B cell (primary cell): ENCODE measurements at regions of chr15 and their contacts with region 1.

Region 1: DNA sequence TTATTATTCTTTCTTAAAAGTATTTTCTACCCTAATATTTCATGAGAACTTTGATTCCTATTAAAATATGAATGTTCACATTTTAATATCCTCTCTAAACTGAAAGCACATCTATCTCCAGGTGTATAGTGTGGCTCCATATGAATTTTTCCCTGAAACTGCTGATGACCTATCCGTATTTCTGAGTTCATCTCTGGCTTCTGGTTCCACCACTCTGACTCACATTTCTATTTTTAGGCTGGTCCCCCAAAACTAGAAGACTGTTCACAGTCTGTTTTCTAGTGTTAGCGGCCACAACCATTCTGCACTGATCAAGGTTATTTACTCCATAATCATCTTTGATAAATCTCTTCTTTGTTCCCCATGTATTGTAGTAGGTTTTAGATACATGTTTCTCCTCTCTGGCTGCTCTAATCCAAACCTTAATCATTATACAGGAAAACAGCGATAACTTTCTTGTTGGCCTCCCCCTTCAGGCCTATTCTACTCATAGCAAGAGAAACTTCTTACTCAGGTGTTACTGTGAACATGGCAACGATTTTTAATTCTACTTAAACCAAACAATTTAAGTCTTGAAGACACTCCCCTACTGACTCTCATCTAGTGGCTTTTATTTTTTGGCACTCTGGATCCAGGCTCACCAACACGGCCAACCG is 12.8 kb downstream of the ADPGK start:
- DNase-seq: no peak
- ATAC-seq: no peak
- H3K4me3 ChIP-seq: no peak overlapping the region
- H3K4me3 Mint-ChIP-seq: no peak overlapping the region
- H3K27ac ChIP-seq: peak overlapping the region in 1 of 2 donors; percentile 14
- H3K27ac Mint-ChIP-seq: peak overlapping the region; percentile 22
- H3K4me1 ChIP-seq: peaks cover 23% of the 10 kb centered on the region in 2 donors
- H3K4me1 Mint-ChIP-seq: peaks cover 30% of the 10 kb centered on the region
- H3K27me3 ChIP-seq: no peaks in the 10 kb centered on the region
- H3K27me3 Mint-ChIP-seq: no peaks in the 10 kb centered on the region
- CTCF ChIP-seq: peak; percentile 24

Region 2: DNA sequence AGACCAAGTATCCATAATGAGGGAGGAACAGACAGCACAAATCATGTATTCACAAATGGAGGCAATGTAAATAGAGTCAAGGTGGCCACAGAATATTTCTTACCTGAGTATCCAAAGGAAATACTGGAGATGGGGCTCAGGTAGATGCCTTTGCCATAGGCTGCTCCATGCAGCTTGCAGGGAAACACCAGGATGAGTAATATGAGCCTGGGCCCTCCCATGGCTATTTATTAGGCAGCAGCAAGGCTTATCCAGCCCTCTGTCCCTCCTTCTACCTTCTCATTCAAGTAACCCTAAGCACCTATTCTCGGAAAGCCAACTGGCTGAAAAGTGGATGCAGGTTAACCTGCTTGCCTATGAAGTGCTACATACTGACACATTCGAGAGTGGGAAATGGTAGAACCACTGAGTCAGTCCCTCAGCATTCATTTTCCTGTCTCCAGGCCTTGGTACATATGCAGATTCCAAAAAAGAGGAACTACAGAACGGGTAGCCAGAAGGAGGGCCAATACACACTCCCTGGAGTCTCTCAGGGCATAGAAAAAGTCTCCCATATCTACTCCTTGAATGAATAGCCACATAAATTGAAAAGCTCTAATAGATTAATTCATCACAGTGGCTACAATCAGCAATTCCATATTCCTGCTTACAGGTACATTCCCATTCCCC is 521.5 kb before region 1 on chr15:
- CTCF ChIA-PET with region 1: no interaction called
- POLR2A ChIA-PET with region 1: no interaction called
- intact Hi-C with region 1: no loop called
- DNase-seq: no peak
- ATAC-seq: no peak
- H3K4me3 ChIP-seq: no peak overlapping the region
- H3K4me3 Mint-ChIP-seq: no peak overlapping the region
- H3K27ac ChIP-seq: no peak overlapping the region
- H3K27ac Mint-ChIP-seq: no peak overlapping the region
- H3K4me1 ChIP-seq: no peaks in the 10 kb centered on the region
- H3K4me1 Mint-ChIP-seq: no peaks in the 10 kb centered on the region
- H3K27me3 ChIP-seq: no peaks in the 10 kb centered on the region
- H3K27me3 Mint-ChIP-seq: no peaks in the 10 kb centered on the region
- CTCF ChIP-seq: no peak

Region 3: DNA sequence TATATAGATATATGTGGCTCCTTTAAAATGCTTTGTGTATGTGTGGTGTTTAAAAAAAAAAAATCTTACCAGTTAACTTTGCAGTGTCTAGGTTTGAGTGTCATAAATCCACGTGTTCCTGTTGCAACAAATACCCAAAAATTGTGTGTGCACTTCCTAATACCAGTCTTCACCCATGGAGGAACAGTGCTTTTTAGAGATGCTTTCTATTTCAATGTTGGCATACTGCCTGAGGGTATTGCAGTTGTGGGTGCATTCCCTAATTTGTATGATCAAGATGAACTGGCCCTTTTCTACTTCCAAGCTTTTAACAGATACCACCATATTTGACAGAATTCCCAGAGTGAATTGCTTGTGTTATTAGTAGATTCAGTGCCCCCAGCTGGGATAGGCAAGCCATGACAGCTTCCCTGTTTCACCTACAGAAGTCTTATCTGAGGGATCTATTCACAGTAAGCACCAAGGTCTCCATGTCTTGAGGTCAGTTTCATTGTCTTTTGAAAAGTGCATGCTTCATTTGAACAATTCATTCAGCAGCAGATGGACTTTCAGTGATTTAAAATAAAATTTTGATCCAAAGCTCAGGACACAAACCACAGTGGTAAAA is 185.2 kb before region 1 on chr15:
- CTCF ChIA-PET with region 1: no interaction called
- POLR2A ChIA-PET with region 1: interaction called, 10 read pairs
- intact Hi-C with region 1: no loop called
- DNase-seq: no peak
- ATAC-seq: no peak
- H3K4me3 ChIP-seq: no peak overlapping the region
- H3K4me3 Mint-ChIP-seq: no peak overlapping the region
- H3K27ac ChIP-seq: no peak overlapping the region
- H3K27ac Mint-ChIP-seq: no peak overlapping the region
- H3K4me1 ChIP-seq: no peaks in the 10 kb centered on the region
- H3K4me1 Mint-ChIP-seq: no peaks in the 10 kb centered on the region
- H3K27me3 ChIP-seq: no peaks in the 10 kb centered on the region
- H3K27me3 Mint-ChIP-seq: no peaks in the 10 kb centered on the region
- CTCF ChIP-seq: no peak